ENCODE measurements at regions of chr4 and their contacts with region 1.

Region 1: DNA sequence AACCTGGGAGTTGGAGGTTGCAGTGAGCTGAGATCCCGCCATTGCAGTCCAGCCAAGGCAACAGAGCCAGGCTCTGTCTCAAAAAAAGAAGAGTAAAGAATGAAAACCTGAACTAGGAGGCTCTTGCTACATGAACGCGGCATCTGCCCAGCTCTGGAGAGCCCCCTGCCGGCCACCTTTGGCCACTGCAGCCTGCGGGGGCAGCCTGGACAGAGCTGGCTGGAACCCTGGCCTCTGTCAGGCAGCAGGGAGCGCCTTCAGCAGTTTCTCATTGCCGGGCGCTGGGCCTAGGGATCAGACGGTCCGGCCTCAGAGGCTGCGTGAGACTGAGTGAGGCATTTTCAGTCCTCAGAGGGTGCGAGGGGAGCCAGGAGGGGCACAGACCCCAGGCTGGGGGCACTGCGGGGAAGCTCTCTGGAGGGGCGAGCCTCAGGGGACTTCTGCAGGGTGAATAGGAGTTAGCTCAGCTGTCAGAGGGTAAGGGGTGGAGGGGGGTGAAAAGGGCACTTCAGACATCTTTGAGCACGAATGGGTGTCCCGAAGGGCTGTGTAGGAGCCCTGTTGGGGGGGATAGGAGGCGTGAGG is 17.5 kb downstream of the DOK7 start:
- H3K4me3 Mint-ChIP-seq: no peak overlapping the region
- H3K27ac Mint-ChIP-seq: no peak overlapping the region
- H3K4me1 Mint-ChIP-seq: peaks cover 8% of the 10 kb centered on the region
- H3K27me3 Mint-ChIP-seq: peaks cover 63% of the 10 kb centered on the region

Region 2: DNA sequence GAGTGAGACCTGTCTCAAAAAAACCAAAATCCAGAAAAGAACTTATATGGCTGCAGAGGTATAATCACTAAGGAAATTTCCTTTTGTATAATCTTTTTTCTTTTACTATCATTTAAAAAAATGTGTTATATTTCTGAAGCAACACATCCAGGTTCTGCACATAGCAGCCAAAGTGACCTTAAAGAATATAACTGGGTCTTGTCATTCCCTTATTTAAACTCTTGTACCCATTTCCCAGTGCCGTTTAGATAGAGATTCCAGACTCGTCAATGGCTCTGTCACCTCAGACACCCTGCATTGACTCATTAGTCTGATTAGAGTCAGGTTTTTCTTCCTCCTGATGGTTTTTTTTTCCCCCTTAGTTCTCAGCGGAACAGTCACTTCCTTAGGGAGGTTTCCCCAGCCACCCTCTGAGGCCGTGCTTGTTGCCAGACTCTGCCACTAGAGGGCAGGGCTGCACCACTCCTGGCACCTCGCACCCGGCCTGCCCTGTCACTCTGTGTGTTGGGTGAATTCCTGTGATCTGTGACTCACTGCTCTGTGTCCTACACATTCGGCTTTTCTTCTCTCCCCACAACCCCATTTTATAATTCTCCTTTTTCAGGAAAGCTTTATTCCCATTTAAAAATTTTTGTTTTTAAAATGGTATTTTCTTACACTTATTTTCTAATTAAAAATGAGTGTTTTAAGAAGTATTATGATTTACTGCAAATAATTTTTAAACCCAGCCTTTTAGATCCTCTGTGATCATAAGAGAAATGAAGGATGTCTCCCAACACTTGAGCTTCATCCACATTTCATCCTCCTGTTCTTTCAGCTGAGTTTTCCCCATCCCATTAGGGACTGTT is 374.1 kb before region 1 on chr4:
- intact Hi-C with region 1: loop called (anchors 5 kb)
- H3K4me3 Mint-ChIP-seq: no peak overlapping the region
- H3K27ac Mint-ChIP-seq: peak overlapping the region; percentile 52
- H3K4me1 Mint-ChIP-seq: peaks cover 11% of the 10 kb centered on the region
- H3K27me3 Mint-ChIP-seq: no peaks in the 10 kb centered on the region

Measured in dendritic cell treated with granulocyte-macrophage colony-stimulating factor and Interleukin-4, amounts not matched to agents 40 ng/mL and 50 ng/mL, for 4 days (primary cell).